ENCODE measurements at regions of chr12 and their contacts with region 1.

Region 1: GRCh38 chr12:51424662-51425438 is at the start of gene SLC4A8:
- DNase-seq: peak; percentile 88
- H3K4me3 Mint-ChIP-seq: peak within 1 kb of the TSS; percentile 71
- H3K27ac Mint-ChIP-seq: no peak within 1 kb of the TSS
- H3K4me1 Mint-ChIP-seq: peaks cover 9% of the 10 kb centered on the region
- H3K27me3 Mint-ChIP-seq: no peaks in the 10 kb centered on the region
- total RNA-seq, gene SLC4A8: 1.8 to 3.7 TPM

Region 2: DNA sequence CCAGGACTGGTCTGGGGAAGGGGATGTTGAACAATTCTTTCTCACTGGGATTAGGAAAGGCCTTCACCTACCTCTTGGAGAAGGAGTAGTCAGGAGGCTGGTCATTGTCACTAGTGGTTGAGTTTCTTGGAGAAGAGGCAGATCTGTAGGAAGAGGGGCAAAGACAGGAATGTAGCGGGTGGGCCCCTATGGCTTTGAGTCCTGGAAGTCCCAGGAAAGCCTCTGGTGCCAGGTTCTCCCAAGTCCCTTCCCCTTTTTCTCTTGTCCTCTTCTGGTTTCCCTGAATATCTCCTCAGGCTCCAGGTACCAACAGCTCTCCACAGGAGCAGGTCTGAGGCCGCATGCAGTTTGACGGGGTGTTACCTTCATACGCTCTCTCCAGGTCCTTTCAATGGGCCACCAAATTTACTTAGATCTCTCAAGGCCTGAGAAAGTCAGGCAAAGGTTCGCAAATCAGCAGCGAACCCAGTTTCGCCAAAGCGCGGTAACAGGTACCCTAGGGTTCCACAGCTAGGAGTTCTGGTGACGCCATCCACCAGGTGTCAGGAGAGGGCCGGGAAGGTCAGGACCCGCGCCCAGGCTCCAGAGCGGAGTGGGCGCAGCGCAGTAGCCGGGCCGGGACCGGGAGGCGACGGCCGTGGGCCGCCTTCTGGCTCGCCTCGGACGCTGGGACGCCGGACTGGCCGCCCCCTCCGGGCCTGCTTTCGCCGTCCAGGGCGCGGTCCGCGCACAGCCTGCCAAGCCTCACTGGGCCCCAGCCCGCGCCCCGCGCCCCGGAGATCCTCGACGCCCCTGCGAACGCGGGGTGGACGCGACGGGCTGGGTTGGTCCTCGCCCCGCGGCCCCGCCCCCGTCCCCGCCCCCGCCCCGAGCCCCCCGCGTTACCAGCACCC is 155.4 kb before region 1 on chr12:
- CTCF ChIA-PET with region 1: no interaction called
- POLR2A ChIA-PET with region 1: no interaction called
- intact Hi-C with region 1: no loop called
- DNase-seq: peak; percentile 76
- H3K4me3 Mint-ChIP-seq: peak overlapping the region; percentile 60
- H3K27ac Mint-ChIP-seq: no peak overlapping the region
- H3K4me1 Mint-ChIP-seq: peaks cover 27% of the 10 kb centered on the region
- H3K27me3 Mint-ChIP-seq: peaks cover 10% of the 10 kb centered on the region

Region 3: DNA sequence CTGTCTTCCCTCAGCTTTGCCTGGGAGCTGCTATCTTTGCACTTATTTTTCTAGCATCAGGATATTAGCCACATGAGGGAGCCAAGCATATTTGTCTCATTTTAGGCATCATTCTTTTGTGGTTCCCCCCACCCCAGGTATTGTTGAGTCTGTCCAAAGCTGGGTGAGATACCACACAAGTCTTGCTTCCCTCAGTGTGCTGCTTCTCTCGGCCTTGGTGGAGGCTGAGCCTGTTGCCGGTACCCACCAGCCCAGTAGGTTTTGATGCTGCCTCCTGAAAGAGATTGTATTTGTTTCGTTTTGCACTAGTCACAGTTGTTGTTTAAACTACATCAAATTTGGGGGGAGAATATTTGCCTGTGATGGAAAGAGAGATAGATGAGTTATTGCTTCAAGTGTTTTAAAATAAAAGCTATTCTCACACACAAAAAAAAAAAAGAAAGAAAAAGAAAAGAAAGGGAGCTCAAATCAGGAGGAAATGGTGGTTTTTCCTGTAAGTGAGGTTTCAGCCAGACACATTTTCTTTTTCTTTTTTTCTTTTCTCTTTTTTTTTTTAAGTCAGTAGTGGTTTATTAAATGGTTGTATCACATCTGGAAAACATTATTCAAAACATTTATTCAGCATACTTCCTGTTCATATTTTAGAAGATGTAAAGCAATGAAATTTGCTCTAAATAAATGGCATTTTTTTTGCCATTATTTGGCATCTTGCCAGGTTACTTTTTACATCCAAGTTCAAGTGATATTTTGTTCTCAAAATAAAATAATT is 58.3 kb after region 1 on chr12:
- CTCF ChIA-PET with region 1: interaction called, 5 read pairs
- POLR2A ChIA-PET with region 1: no interaction called
- intact Hi-C with region 1: loop called (anchors 5 kb)
- DNase-seq: peak; percentile 47
- H3K4me3 Mint-ChIP-seq: peak overlapping the region; percentile 28
- H3K27ac Mint-ChIP-seq: peak overlapping the region; percentile 74
- H3K4me1 Mint-ChIP-seq: peaks cover 33% of the 10 kb centered on the region
- H3K27me3 Mint-ChIP-seq: no peaks in the 10 kb centered on the region

Region 4: GRCh38 chr12:51521554-51522276 is 96.9 kb after region 1 on chr12:
- CTCF ChIA-PET with region 1: interaction called, 204 read pairs
- POLR2A ChIA-PET with region 1: no interaction called
- intact Hi-C with region 1: no loop called
- DNase-seq: no peak
- H3K4me3 Mint-ChIP-seq: no peak overlapping the region
- H3K27ac Mint-ChIP-seq: no peak overlapping the region
- H3K4me1 Mint-ChIP-seq: no peaks in the 10 kb centered on the region
- H3K27me3 Mint-ChIP-seq: no peaks in the 10 kb centered on the region

Region 5: GRCh38 chr12:51531978-51532497 is 107.2 kb after region 1 on chr12:
- CTCF ChIA-PET with region 1: interaction called, 204 read pairs
- POLR2A ChIA-PET with region 1: no interaction called
- intact Hi-C with region 1: loop called (anchors 1 kb)
- DNase-seq: peak; percentile 82
- H3K4me3 Mint-ChIP-seq: no peak overlapping the region
- H3K27ac Mint-ChIP-seq: no peak overlapping the region
- H3K4me1 Mint-ChIP-seq: peaks cover 7% of the 10 kb centered on the region
- H3K27me3 Mint-ChIP-seq: peaks cover 1% of the 10 kb centered on the region

Region 6: DNA sequence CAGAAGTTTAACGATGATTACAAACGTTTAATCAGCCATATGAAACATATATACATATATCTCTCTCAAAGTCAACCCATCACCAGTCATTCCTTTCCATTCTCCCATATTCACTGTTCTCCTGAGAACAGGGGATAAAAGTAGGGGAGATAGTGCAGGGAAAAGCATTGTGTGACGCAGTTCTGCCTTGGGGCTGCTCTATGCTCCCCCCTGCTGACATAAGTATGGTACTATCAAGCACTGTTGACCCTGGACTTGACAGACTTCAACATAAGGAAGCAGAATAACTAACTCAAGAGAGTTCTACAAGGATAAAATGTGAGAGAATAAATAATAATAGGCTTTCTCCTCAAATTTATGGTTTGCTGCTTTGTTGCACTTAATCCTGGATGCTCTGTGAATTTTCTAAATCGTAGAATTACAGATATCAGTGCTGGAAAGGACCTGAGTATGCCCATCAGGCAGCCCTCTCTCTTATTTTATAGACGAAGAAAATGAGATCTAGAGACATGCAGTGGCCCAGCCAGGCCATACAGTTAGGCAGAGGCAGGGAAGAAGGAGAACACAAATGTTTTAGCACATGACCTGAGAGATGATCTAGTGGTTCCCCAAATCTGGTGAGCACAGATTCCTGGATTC is 253.4 kb after region 1 on chr12:
- CTCF ChIA-PET with region 1: interaction called, 3 read pairs
- POLR2A ChIA-PET with region 1: no interaction called
- intact Hi-C with region 1: loop called (anchors 2 kb)
- DNase-seq: peak; percentile 18
- H3K4me3 Mint-ChIP-seq: no peak overlapping the region
- H3K27ac Mint-ChIP-seq: no peak overlapping the region
- H3K4me1 Mint-ChIP-seq: no peaks in the 10 kb centered on the region
- H3K27me3 Mint-ChIP-seq: peaks cover 9% of the 10 kb centered on the region

Region 7: GRCh38 chr12:51874013-51874412 is 449.2 kb after region 1 on chr12:
- CTCF ChIA-PET with region 1: interaction called, 21 read pairs
- POLR2A ChIA-PET with region 1: no interaction called
- intact Hi-C with region 1: loop called (anchors 1 kb)
- DNase-seq: no peak
- H3K4me3 Mint-ChIP-seq: no peak overlapping the region
- H3K27ac Mint-ChIP-seq: no peak overlapping the region
- H3K4me1 Mint-ChIP-seq: peaks cover 5% of the 10 kb centered on the region
- H3K27me3 Mint-ChIP-seq: peaks cover 17% of the 10 kb centered on the region